ENCODE measurements at regions of chrX and their contacts with region 1.

Region 1: DNA sequence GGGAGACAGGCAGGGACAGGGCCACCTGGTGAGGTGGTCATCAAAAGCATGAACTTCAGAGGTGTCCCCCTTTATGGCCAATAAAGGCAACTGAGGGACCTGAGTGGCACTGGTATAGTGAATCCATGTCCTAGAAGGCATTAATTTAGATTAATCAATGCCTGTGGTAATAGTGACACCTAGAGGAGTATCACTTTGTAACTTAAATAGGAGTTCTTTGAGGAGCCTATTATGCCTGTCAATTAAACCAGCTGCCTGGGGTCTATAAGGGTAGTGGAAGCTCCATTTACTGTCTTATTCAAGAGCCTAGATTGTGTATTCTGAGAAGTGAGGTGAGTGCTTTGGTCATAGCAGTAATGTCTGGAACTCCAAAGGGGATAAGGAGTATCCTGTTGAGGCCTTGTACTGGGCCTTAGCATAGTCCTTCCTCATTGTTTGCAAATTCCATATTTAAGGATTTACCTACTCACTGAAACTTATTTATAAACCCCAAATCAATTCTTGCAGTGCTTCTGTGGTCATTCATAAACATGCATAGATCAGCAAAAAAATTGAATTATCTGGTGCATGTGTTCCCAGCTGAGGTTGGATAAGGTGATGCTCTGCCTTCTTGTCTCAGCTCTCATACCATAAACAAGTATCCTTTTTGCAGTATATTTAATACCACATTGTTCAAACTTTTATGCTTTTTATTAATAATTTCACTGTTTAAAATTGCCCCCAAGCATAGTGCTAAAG is 213.8 kb upstream of the RADX start:
- DNase-seq: no peak
- H3K4me3 ChIP-seq: no peak overlapping the region
- H3K27ac ChIP-seq: no peak overlapping the region
- H3K27me3 ChIP-seq: peaks cover 0 to 94% (median 38%) of the 10 kb centered on the region in 45 donors
- CTCF ChIP-seq: peak in 35 of 56 donors; percentile 8 to 56 (median 33)

Region 2: GRCh38 chrX:105945266-105945665 is 452.7 kb before region 1 on chrX:
- intact Hi-C with region 1: no loop called
- DNase-seq: no peak
- H3K4me3 ChIP-seq: no peak overlapping the region
- H3K27ac ChIP-seq: no peak overlapping the region
- H3K27me3 ChIP-seq: peaks cover 0 to 77% (median 12%) of the 10 kb centered on the region in 45 donors
- CTCF ChIP-seq: no peak

Region 3: GRCh38 chrX:105975382-105975781 is 422.6 kb before region 1 on chrX:
- intact Hi-C with region 1: loop called (anchors 5 to 10 kb)
- DNase-seq: no peak
- H3K4me3 ChIP-seq: no peak overlapping the region
- H3K27ac ChIP-seq: no peak overlapping the region
- H3K27me3 ChIP-seq: peaks cover 0 to 41% (median 5%) of the 10 kb centered on the region in 45 donors
- CTCF ChIP-seq: peak in 48 of 56 donors; percentile 14 to 65 (median 41)

Region 4: DNA sequence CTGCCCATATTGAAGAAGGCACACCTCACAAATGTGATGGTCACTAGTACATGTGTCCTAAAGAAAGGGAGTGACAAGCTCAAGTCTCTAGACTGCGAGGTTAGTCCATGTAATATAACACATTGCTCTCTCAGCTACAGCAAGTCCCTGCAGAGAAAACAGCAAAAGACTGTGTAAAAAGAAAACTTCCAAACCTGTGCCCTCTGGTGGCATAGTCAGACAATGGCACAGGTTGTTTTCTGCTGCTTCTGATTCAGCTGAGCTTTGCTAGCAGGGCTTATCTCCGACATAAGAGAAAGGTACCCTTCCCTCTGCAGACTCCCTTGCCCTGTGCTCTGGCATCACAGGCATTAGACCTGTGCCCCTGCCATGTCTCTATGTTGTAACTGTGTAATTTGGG is 358.1 kb before region 1 on chrX:
- intact Hi-C with region 1: loop called in 1 of 2 experiments (anchors 10 kb)
- DNase-seq: no peak
- H3K4me3 ChIP-seq: no peak overlapping the region
- H3K27ac ChIP-seq: no peak overlapping the region
- H3K27me3 ChIP-seq: peaks cover 0 to 97% (median 54%) of the 10 kb centered on the region in 45 donors
- CTCF ChIP-seq: peak in 33 of 56 donors; percentile 9 to 50 (median 28)

Region 5: GRCh38 chrX:106170318-106170717 is 227.7 kb before region 1 on chrX:
- intact Hi-C with region 1: loop called (anchors 5 to 10 kb)
- DNase-seq: peak in 1 of 10 donors; percentile 8
- H3K4me3 ChIP-seq: no peak overlapping the region
- H3K27ac ChIP-seq: no peak overlapping the region
- H3K27me3 ChIP-seq: peaks cover 0 to 79% (median 17%) of the 10 kb centered on the region in 45 donors
- CTCF ChIP-seq: peak in 54 of 56 donors; percentile 22 to 75 (median 56)